ENCODE measurements at regions of chr14 and their contacts with region 1.

Region 1: GRCh38 chr14:50830932-50831725 is at the start of gene NIN:
- DNase-seq: peak; percentile 86
- ATAC-seq: peak; percentile 89
- H3K4me3 Mint-ChIP-seq: peak within 1 kb of the TSS; percentile 96
- H3K27ac Mint-ChIP-seq: peak within 1 kb of the TSS; percentile 95
- H3K4me1 Mint-ChIP-seq: peaks cover 35% of the 10 kb centered on the region
- H3K27me3 Mint-ChIP-seq: peaks cover 9% of the 10 kb centered on the region
- total RNA-seq, gene NIN: 106 to 113 TPM

Region 2: DNA sequence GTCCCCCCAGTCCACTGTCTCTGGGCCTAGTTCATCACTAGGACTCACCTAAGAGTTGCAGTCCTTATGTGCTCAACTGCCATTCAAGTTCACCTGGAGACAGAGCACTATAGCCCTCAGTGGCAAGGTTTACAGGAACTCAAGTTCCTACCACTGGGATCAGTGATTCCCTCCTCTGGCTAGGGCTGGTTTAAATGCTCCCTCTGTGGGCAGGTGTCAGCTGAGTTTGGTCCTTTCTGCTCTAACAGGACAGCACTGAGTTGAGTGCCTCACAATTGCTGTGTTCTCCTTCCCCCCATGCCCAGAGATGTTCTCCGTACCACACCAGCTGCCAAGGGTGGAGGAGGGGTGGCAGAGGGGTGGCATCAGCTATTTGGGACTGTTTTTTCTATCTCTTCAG is 142.3 kb before region 1 on chr14:
- POLR2A ChIA-PET with region 1: no interaction called
- DNase-seq: no peak
- ATAC-seq: no peak
- H3K4me3 Mint-ChIP-seq: no peak overlapping the region
- H3K27ac Mint-ChIP-seq: no peak overlapping the region
- H3K4me1 Mint-ChIP-seq: no peaks in the 10 kb centered on the region
- H3K27me3 Mint-ChIP-seq: peaks cover 31% of the 10 kb centered on the region

Region 3: DNA sequence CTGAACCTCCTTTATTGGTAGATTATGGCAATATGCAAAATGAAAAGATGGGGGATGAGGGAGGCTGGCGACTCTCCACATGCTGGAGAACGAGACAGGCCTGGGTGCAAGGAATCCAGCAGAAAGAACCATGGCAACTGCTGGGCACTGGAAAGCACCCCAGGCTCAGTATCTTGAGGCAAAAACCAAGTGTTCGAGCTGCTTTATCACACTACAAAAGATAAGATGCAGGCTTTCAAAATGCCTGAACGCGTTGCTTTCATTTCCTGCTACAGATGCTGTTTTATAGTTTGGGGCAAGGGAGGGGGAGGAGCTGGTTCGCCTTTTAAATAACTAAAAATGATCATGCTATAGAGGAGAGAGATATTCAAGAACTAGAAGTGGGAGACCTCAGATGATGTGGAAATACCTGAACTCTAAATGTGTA is 39.1 kb before region 1 on chr14:
- POLR2A ChIA-PET with region 1: interaction called, 14 read pairs
- DNase-seq: peak; percentile 38
- ATAC-seq: peak; percentile 62
- H3K4me3 Mint-ChIP-seq: peak overlapping the region; percentile 65
- H3K27ac Mint-ChIP-seq: peak overlapping the region; percentile 85
- H3K4me1 Mint-ChIP-seq: peaks cover 50% of the 10 kb centered on the region
- H3K27me3 Mint-ChIP-seq: no peaks in the 10 kb centered on the region

Measured in activated naive CD8-positive, alpha-beta T cell treated with anti-CD3 and anti-CD28 coated beads, Interleukin-2, amount 10 ng/mL, durations not matched to agents 7 days and 5 days (primary cell).